ENCODE measurements at regions of chr12 and their contacts with region 1.

Region 1: GRCh38 chr12:27014085-27014858 is at the start of gene TM7SF3:
- DNase-seq: peak; percentile 89

Region 2: GRCh38 chr12:26044012-26044383 is 970.3 kb before region 1 on chr12:
- CTCF ChIA-PET with region 1: no interaction called
- POLR2A ChIA-PET with region 1: no interaction called
- DNase-seq: no peak

Region 3: GRCh38 chr12:27305673-27306456 is 291.6 kb after region 1 on chr12:
- CTCF ChIA-PET with region 1: interaction called, 10 read pairs
- POLR2A ChIA-PET with region 1: no interaction called
- DNase-seq: no peak